ENCODE measurements at regions of chr1 and their contacts with region 1.

Region 1: GRCh38 chr1:218521375-218522169 is 176.4 kb downstream of the TGFB2 start:
- DNase-seq: peak; percentile 50
- H3K4me3 ChIP-seq: no peak overlapping the region
- H3K27ac ChIP-seq: no peak overlapping the region
- H3K4me1 ChIP-seq: no peaks in the 10 kb centered on the region
- H3K27me3 ChIP-seq: no peaks in the 10 kb centered on the region
- CTCF ChIP-seq: peak; percentile 52

Region 2: DNA sequence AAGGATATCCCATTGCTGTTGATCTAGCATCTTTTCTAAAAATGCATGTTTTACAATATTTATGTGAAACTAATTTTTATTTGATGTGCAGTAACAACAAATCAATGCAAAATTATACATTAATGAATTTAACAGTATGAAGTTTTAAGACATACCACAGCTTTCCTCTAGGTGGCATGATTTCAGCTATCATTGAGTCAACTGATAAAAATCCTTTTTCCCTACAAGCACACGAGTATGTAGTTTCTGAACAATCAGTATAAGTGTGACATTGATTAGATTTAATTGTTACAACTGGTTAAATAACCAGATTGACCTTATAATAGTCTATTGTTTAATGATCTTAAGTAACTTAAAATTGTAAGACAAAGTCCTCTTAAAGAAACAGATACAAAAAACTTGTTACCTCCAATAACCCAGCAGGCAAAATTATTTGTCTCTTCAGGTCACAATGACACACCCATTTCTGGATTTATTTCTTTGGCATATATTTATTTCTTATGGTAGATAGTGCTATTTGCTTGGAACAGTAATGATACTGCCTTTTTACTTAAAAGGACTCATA is 182.2 kb before region 1 on chr1:
- intact Hi-C with region 1: loop called (anchors 5 kb)
- DNase-seq: no peak
- H3K4me3 ChIP-seq: no peak overlapping the region
- H3K27ac ChIP-seq: no peak overlapping the region
- H3K4me1 ChIP-seq: peaks cover 4% of the 10 kb centered on the region
- H3K27me3 ChIP-seq: no peaks in the 10 kb centered on the region
- CTCF ChIP-seq: peak; percentile 66

Measured in colonic mucosa (tissue), 4 donors.